ENCODE measurements at regions of chr16 and their contacts with region 1.

Region 1: GRCh38 chr16:51982715-51983680 is 563.9 kb downstream of the TOX3 start:
- DNase-seq: peak; percentile 25 to 76
- ATAC-seq: peak; percentile 67 to 75; a peak in 3 of 6 replicates
- H3K4me3 ChIP-seq: no peak overlapping the region
- H3K27ac ChIP-seq: no peak overlapping the region
- H3K4me1 ChIP-seq: no peaks in the 10 kb centered on the region
- CTCF ChIP-seq: peak; percentile 75
- EP300 ChIP-seq: no peak
- POLR2A ChIP-seq: no peak
- RAD21 ChIP-seq: peak; percentile 87 to 90

Region 2: DNA sequence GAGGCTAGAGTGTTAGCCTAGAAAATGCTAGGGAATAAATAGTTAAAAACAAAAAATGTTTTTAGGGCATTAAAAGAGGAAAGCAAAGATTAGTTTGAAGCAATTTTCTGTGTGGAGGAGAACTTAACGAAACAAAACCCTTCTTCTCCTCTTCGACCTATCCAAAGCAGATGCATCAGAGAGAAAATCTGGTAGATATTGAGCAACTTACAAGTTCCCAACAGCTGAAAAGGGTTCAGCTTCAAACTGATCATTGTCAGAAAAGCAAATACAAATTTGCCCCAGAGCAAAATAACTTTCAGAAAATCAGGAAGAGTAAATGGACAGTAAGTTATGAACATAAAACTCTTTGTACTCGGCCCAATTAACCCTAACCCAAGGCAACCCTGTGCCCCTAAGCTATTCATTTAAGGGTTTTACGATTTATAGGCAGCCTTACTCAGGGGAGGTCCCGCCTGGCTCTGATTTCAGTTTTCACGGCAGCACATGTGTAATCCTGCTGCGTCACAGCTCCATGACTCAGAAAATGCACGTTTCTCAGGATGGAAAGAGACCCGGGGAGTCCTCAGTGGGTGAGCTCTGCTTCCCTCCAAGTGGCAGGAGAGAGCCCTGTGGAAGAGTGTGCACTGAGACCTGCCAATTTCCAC is 426.2 kb before region 1 on chr16:
- CTCF ChIA-PET with region 1: no interaction called
- POLR2A ChIA-PET with region 1: no interaction called
- DNase-seq: peak; percentile 79 to 92
- ATAC-seq: peak; percentile 97
- H3K4me3 ChIP-seq: peak overlapping the region; percentile 11; the same call in 1 of the 3 replicates
- H3K27ac ChIP-seq: peak overlapping the region; percentile 84 to 86
- H3K4me1 ChIP-seq: peaks cover 21% of the 10 kb centered on the region
- CTCF ChIP-seq: no peak
- EP300 ChIP-seq: peak; percentile 80 to 94
- POLR2A ChIP-seq: no peak
- RAD21 ChIP-seq: peak in 1 of 2 experiments; percentile 65; a peak in 3 of 5 replicates

Region 3: DNA sequence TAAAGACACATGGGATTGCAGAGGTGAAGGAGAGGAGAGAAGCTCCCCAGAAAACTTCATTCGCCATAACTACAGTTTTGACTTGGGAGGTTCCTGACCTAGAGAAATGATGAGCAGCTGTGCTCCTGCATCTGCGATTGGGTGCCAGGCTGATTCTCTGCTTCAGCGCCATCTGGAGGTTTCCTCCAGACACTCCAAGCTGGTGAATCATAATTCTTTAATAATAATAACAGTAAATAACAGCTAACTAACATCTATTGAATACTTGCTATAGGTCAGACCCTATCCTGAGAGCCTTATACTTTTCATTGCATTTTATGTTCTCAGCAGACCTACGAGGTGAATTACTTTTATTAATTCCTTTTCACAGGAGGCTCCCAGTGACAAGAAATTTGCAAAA is 11.8 kb before region 1 on chr16:
- CTCF ChIA-PET with region 1: interaction called, 37 read pairs
- POLR2A ChIA-PET with region 1: no interaction called
- DNase-seq: peak; percentile 13 to 20
- ATAC-seq: peak in 1 of 2 experiments; percentile 60; a peak in 3 of 6 replicates
- H3K4me3 ChIP-seq: no peak overlapping the region
- H3K27ac ChIP-seq: no peak overlapping the region
- H3K4me1 ChIP-seq: no peaks in the 10 kb centered on the region
- CTCF ChIP-seq: no peak
- EP300 ChIP-seq: no peak
- POLR2A ChIP-seq: no peak
- RAD21 ChIP-seq: no peak; a peak in 1 of 5 replicates

Region 4: DNA sequence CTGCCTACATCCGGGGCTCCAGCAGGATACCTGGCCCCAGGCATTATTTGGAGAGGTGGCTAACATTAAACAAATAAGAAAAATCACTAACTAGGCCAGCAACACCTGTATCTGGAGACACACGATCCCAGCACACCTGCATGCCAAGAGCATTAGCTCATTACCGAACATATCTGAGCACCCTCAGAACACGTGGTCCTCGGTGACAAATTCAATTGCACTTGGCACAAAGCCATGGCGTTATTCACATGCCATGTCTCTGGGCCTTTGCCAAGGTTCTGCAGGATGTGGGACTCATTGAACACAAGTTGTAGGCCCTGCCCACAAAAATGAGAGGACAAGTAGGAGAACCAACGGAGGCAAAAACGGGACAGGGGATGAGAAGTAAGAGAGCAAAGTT is 11.6 kb after region 1 on chr16:
- CTCF ChIA-PET with region 1: interaction called, 15 read pairs
- POLR2A ChIA-PET with region 1: no interaction called
- DNase-seq: peak in 1 of 2 experiments; percentile 19
- ATAC-seq: no peak
- H3K4me3 ChIP-seq: no peak overlapping the region
- H3K27ac ChIP-seq: no peak overlapping the region
- H3K4me1 ChIP-seq: no peaks in the 10 kb centered on the region
- CTCF ChIP-seq: no peak
- EP300 ChIP-seq: no peak
- POLR2A ChIP-seq: no peak
- RAD21 ChIP-seq: no peak

Region 5: GRCh38 chr16:52022177-52022576 is 39.2 kb after region 1 on chr16:
- CTCF ChIA-PET with region 1: no interaction called
- POLR2A ChIA-PET with region 1: no interaction called
- DNase-seq: no peak
- ATAC-seq: no peak
- H3K4me3 ChIP-seq: no peak overlapping the region
- H3K27ac ChIP-seq: no peak overlapping the region
- H3K4me1 ChIP-seq: no peaks in the 10 kb centered on the region
- CTCF ChIP-seq: no peak
- EP300 ChIP-seq: no peak
- POLR2A ChIP-seq: no peak
- RAD21 ChIP-seq: no peak

Region 6: DNA sequence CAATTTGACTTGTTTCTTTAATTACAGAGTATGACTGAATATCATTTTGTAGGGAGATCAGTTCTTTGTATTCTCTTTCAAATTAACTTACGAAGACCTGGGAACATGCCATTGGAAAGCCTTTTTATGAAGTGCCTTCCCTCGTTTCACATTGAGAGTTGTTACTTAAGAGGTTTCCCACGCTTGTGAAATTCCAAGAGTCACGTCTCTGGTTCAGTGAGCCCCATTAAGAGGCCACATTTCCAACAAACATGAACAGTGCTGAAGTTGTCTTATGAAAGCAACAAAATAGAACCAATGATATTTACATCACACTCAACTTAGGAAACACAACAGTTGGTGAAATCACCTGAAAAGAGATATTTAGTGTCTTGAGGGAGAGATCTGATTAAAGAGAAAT is 229.8 kb after region 1 on chr16:
- CTCF ChIA-PET with region 1: no interaction called
- POLR2A ChIA-PET with region 1: no interaction called
- DNase-seq: no peak
- ATAC-seq: no peak
- H3K4me3 ChIP-seq: no peak overlapping the region
- H3K27ac ChIP-seq: no peak overlapping the region
- H3K4me1 ChIP-seq: no peaks in the 10 kb centered on the region
- CTCF ChIP-seq: no peak
- EP300 ChIP-seq: no peak
- POLR2A ChIP-seq: no peak
- RAD21 ChIP-seq: no peak

Measured in A549 (cell line).